ENCODE measurements at regions of chr2 and their contacts with region 1.

Region 1: DNA sequence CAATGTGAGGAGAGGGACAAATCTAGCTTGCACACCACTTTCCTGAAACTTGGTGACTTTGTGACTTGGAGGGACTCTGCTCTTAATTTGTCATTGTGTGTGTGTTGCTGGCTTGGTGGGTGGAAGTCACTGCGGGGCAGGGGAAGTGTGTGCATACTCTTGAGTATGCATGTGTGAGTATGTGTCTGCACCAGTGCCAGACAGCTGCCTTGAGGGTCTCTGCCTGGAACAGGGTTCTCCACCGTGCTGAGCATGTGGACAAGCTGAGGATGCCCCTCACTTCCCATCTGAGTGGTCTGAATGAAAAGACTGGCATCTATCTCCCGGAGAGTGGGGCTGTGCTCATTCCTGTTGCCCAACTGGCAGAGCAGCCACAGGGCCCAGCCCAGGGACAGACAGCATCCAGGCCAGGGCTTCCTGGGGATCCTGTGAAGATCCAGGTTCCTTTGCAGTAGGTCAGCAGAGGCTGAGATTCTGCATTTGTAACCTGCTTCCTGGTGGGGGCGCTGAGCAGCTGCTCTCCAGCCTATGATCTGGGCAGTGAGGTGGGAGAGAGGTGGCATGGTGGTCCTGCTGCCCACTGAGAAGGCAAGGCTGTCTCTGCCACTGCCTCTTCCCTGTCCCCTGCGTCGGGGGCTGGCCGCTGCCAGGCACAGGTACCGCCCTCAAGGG is 138.9 kb upstream of the HAAO start:
- DNase-seq: no peak
- ATAC-seq: no peak
- H3K4me3 Mint-ChIP-seq: no peak overlapping the region
- H3K27ac Mint-ChIP-seq: no peak overlapping the region
- H3K4me1 Mint-ChIP-seq: no peaks in the 10 kb centered on the region
- H3K27me3 Mint-ChIP-seq: no peaks in the 10 kb centered on the region
- CTCF ChIP-seq: no peak

Region 2: GRCh38 chr2:42828487-42829425 is 102.5 kb before region 1 on chr2:
- CTCF ChIA-PET with region 1: interaction called, 4 read pairs
- POLR2A ChIA-PET with region 1: no interaction called
- intact Hi-C with region 1: loop called (anchors 10 kb)
- DNase-seq: peak; percentile 79
- ATAC-seq: peak; percentile 95
- H3K4me3 Mint-ChIP-seq: no peak overlapping the region
- H3K27ac Mint-ChIP-seq: no peak overlapping the region
- H3K4me1 Mint-ChIP-seq: peaks cover 16% of the 10 kb centered on the region
- H3K27me3 Mint-ChIP-seq: peaks cover 3% of the 10 kb centered on the region
- CTCF ChIP-seq: peak; percentile 85

Region 3: DNA sequence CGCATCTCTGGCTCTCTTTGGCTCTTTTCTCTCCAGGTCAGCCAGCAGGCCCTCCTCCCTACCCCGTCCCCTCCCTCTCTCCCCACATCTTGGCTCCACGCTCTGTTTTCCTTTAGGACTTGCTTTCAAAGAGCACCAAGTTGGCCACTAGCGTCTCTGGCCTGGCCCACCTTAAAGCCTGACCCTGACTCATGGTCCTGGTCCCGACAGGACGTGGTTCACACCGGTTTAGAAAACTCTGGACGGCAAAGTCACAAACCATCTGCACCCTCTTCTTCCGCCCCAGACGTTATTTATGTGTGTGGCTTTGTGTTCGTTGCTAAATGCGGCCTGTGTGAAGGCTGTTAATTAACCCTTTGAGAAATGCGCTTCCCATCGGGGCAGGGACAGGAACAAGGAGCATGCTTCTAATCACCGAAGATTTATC is 30.1 kb after region 1 on chr2:
- CTCF ChIA-PET with region 1: no interaction called
- POLR2A ChIA-PET with region 1: no interaction called
- intact Hi-C with region 1: no loop called
- DNase-seq: no peak
- ATAC-seq: no peak
- H3K4me3 Mint-ChIP-seq: no peak overlapping the region
- H3K27ac Mint-ChIP-seq: no peak overlapping the region
- H3K4me1 Mint-ChIP-seq: peaks cover 16% of the 10 kb centered on the region
- H3K27me3 Mint-ChIP-seq: peaks cover 14% of the 10 kb centered on the region
- CTCF ChIP-seq: no peak

Measured in activated CD8-positive, alpha-beta T cell treated with anti-CD3 and anti-CD28 coated beads for 36 hours (primary cell).